Heart right ventricle (tissue), 16 donors: ENCODE measurements at regions of chr11 and their contacts with region 1.

Region 1: DNA sequence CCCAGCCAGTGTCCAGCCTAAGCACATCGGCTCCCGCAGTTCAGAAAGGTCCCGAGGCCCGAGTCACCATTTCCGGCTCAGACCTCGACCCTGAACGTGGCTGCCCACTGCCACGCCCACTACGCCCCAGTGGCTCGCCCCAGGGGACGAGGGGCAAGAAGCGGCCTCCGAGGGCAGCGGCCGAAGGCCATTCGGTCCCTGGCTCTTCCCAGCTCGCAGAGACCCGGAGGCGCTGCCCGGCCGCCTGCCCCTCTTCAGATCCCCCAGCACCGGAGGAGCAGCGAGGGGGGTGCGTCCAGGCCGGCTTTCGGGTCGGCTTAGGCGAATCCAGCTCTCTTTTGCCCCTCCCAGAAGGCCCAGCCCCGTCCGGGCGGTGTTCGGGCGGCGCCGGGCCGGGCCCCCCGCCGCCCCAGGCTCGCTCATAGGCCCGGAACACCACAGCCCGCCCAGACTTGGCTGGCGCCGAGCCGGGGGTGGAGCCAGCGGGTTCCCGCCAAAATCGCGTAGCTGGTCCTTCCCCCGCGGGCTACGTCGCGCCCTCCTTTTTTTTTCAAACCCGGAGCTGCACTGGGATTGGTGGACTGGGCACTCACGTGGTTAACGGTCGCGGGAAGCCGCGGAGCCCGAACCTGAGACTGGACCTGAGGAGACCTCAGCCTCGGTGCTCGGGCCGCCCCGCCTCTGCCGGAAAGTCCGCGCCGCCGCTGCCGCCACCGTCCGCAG is at the start of gene WEE1:
- DNase-seq: peak; percentile 98 to 99
- ATAC-seq: peak; percentile 94 to 98 (median 96)
- H3K4me3 ChIP-seq: peak within 1 kb of the TSS; percentile 54 to 95 (median 82)
- H3K27ac ChIP-seq: peak within 1 kb of the TSS; percentile 86 to 98 (median 96)
- H3K4me1 ChIP-seq: peaks cover 3 to 57% (median 35%) of the 10 kb centered on the region in 9 donors
- H3K27me3 ChIP-seq: no peaks in the 10 kb centered on the region
- CTCF ChIP-seq: no peak
- total RNA-seq, gene WEE1: 22.9 to 114 (median 59.0) TPM

Region 2: GRCh38 chr11:9460322-9461067 is 112.7 kb before region 1 on chr11 and contains the start of gene ZNF143:
- intact Hi-C with region 1: loop called in 2 of 10 experiments (anchors 5 kb)
- DNase-seq: peak; percentile 100
- ATAC-seq: peak; percentile 94 to 98 (median 97)
- H3K4me3 ChIP-seq: peak within 1 kb of the TSS; percentile 71 to 99 (median 80)
- H3K27ac ChIP-seq: peak within 1 kb of the TSS; percentile 97 to 100 (median 98)
- H3K4me1 ChIP-seq: peaks cover 3 to 29% (median 21%) of the 10 kb centered on the region in 9 donors
- H3K27me3 ChIP-seq: no peaks in the 10 kb centered on the region
- CTCF ChIP-seq: no peak
- total RNA-seq, gene ZNF143: 11.7 to 28.8 (median 17.6) TPM

Region 3: GRCh38 chr11:9527481-9528140 is 45.6 kb before region 1 on chr11:
- intact Hi-C with region 1: loop called in 1 of 10 experiments (anchors 5 kb)
- DNase-seq: peak in 1 of 2 donors; percentile 33
- ATAC-seq: peak in 7 of 8 donors; percentile 34 to 72 (median 58)
- H3K4me3 ChIP-seq: no peak overlapping the region
- H3K27ac ChIP-seq: peak overlapping the region in 4 of 10 donors; percentile 2 to 51 (median 12)
- H3K4me1 ChIP-seq: peaks cover 2 to 32% (median 18%) of the 10 kb centered on the region in 9 donors
- H3K27me3 ChIP-seq: no peaks in the 10 kb centered on the region
- CTCF ChIP-seq: no peak